Activated naive CD4-positive, alpha-beta T cell treated with anti-CD3 and anti-CD28 coated beads for 36 hours (primary cell): ENCODE measurements at regions of chr16 and their contacts with region 1.

Region 1: GRCh38 chr16:29738514-29738913 is 7.3 kb downstream of the C16orf54 start:
- DNase-seq: peak; percentile 68
- H3K4me3 Mint-ChIP-seq: no peak overlapping the region
- H3K27ac Mint-ChIP-seq: peak overlapping the region; percentile 76
- H3K4me1 Mint-ChIP-seq: peaks cover 78% of the 10 kb centered on the region
- H3K27me3 Mint-ChIP-seq: no peaks in the 10 kb centered on the region

Region 2: DNA sequence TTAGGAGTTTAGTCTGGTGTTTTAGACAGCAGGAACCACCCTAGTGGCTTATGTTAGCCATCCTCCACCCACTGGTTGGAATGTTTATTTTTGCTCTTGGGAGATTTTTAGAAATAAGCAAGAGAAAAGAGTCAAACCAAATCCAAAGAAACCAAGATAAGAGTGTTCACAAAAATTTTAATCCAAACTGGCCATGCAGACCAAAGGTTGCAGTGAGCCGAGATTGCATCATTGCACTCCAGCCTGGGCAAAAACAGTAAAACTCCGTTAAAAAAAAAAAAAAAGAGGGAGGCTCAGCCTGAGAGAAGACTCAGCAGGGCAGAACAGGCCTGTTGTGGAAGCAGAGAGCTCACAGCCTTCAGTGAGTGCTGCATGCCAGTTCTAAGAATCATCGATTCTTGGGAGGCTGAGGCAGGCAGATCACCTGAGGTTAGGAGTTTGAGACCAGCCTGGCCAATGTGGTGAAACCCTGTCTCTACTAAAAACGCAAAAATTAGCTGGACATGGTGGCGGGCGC is 19.5 kb after region 1 on chr16:
- CTCF ChIA-PET with region 1: interaction called, 6 read pairs
- intact Hi-C with region 1: loop called (anchors 2 kb)
- DNase-seq: no peak
- H3K4me3 Mint-ChIP-seq: no peak overlapping the region
- H3K27ac Mint-ChIP-seq: no peak overlapping the region
- H3K4me1 Mint-ChIP-seq: peaks cover 38% of the 10 kb centered on the region
- H3K27me3 Mint-ChIP-seq: no peaks in the 10 kb centered on the region

Region 3: GRCh38 chr16:29784901-29785500 is 46.5 kb after region 1 on chr16:
- CTCF ChIA-PET with region 1: interaction called, 12 read pairs
- intact Hi-C with region 1: loop called (anchors 1 kb)
- DNase-seq: peak; percentile 82
- H3K4me3 Mint-ChIP-seq: peak overlapping the region; percentile 61
- H3K27ac Mint-ChIP-seq: no peak overlapping the region
- H3K4me1 Mint-ChIP-seq: peaks cover 25% of the 10 kb centered on the region
- H3K27me3 Mint-ChIP-seq: no peaks in the 10 kb centered on the region

Region 4: GRCh38 chr16:29790183-29790952 is 51.9 kb after region 1 on chr16 and contains the start of gene KIF22:
- CTCF ChIA-PET with region 1: interaction called, 12 read pairs
- intact Hi-C with region 1: loop called (anchors 1 kb)
- DNase-seq: peak; percentile 100
- H3K4me3 Mint-ChIP-seq: peak within 1 kb of the TSS; percentile 100
- H3K27ac Mint-ChIP-seq: peak within 1 kb of the TSS; percentile 98
- H3K4me1 Mint-ChIP-seq: peaks cover 35% of the 10 kb centered on the region
- H3K27me3 Mint-ChIP-seq: no peaks in the 10 kb centered on the region
- total RNA-seq, gene KIF22: 201 to 209 TPM

Region 5: DNA sequence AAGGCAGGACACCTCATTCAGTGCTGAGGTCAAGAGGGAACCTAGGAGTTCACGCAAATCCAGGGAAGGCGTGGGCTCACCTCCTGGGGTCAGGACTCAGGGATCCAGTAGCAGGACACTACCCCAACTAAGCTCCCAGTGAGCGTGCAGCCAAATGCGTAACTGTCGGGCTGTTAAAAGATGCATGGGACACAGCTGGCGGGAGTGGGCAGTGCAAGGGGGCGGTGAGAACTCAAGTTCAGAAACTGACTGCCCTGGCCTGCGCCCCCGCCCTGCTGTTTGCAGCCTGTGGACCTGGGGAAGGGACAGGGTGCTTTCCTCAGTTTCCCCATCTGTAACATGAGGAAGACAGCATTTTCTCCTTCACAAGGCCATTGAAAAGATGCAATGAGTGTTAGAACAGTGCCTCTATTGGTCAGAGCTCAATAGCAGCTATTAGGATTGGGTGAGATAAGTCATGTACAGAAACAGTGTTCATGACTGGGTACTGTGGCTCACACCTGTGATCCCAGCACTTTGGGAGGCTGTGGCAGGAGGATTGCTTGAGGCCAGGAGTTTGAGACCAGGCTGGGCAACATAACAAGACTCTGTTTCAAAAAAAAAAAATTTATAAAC is 104.3 kb after region 1 on chr16:
- CTCF ChIA-PET with region 1: no interaction called
- intact Hi-C with region 1: no loop called
- DNase-seq: no peak
- H3K4me3 Mint-ChIP-seq: no peak overlapping the region
- H3K27ac Mint-ChIP-seq: peak overlapping the region; percentile 41
- H3K4me1 Mint-ChIP-seq: peaks cover 2% of the 10 kb centered on the region
- H3K27me3 Mint-ChIP-seq: no peaks in the 10 kb centered on the region

Region 6: DNA sequence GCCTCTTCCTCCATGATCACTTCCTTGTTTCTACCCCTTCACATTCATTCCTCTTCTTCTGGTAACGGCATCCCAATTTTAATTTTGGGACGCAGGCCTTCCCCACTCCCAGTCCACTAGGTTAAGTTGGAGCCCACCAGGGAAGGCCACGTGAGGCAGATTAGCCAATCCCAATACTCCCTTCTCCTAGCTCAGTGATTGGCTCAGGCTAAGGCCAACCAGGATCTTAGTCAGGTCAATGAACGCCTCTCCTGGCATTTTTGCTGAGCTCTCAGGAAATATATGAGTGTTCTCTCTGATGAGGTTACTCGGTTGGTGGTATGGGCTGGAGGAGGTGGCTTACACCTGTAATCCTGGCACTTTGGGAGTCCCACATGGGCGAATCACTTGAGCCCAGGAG is 145.5 kb after region 1 on chr16:
- CTCF ChIA-PET with region 1: no interaction called
- intact Hi-C with region 1: no loop called
- DNase-seq: no peak
- H3K4me3 Mint-ChIP-seq: no peak overlapping the region
- H3K27ac Mint-ChIP-seq: no peak overlapping the region
- H3K4me1 Mint-ChIP-seq: no peaks in the 10 kb centered on the region
- H3K27me3 Mint-ChIP-seq: peaks cover 5% of the 10 kb centered on the region